Aorta (tissue), 5 donors: ENCODE measurements at regions of chr3 and their contacts with region 1.

Region 1: DNA sequence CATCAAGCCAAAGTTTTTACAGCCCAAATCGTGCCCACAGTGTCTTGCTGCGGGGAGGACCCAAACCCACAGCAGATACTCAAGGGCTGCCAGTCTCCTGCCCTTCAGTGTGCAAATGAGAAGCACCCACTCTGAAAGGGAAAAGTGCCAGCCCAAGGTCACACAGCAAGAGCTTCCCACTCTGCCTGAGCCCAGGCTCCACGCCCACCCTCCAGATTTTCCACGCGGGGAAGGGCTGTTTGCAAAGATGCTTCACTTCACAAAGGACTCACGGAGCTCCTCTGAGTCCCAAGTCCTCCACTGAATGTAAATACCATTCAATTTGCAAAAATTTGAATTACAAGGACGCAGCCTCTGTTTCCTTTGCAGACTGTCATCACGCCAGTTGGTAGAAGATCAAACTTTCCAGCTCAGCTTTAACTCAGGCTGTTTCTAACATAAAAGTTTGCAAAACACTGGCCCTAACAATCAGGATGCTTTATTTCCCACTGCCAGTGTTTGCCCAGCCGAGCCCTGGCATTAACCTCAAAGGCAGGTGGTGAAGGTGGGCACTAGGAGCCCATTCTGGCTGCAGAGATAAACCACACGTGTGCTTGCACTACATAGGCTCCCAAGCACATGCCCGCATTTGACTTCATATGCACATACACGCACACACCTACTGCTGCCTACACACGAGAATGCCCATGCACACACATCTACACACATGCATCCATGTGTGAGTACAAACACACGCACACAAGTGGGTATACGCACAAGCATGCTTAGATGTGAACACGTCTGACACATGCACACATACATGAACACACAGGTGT is 7.6 kb downstream of the CACNA2D2 start:
- DNase-seq: no peak
- ATAC-seq: no peak
- H3K4me3 ChIP-seq: no peak overlapping the region
- H3K27ac ChIP-seq: no peak overlapping the region
- H3K4me1 ChIP-seq: no peaks in the 10 kb centered on the region
- H3K27me3 ChIP-seq: no peaks in the 10 kb centered on the region

Region 2: GRCh38 chr3:50454481-50455070 is 41.2 kb before region 1 on chr3:
- intact Hi-C with region 1: loop called in 1 of 2 experiments (anchors 2 kb)
- DNase-seq: no peak
- ATAC-seq: no peak
- H3K4me3 ChIP-seq: no peak overlapping the region
- H3K27ac ChIP-seq: no peak overlapping the region
- H3K4me1 ChIP-seq: no peaks in the 10 kb centered on the region
- H3K27me3 ChIP-seq: no peaks in the 10 kb centered on the region